ENCODE measurements at regions of chr18 and their contacts with region 1.

Region 1: GRCh38 chr18:55220523-55220922 is 261.3 kb upstream of the CCDC68 start:
- DNase-seq: no peak
- ATAC-seq: no peak
- H3K4me3 ChIP-seq: no peak overlapping the region
- H3K27ac ChIP-seq: no peak overlapping the region
- H3K4me1 ChIP-seq: peaks cover 4% of the 10 kb centered on the region; the same call in 1 of the 2 replicates
- H3K27me3 ChIP-seq: no peaks in the 10 kb centered on the region
- CTCF ChIP-seq: no peak
- POLR2A ChIP-seq: no peak
- RAD21 ChIP-seq: no peak

Region 2: GRCh38 chr18:54444319-54444914 is 776.1 kb before region 1 on chr18:
- CTCF ChIA-PET with region 1: no interaction called
- POLR2A ChIA-PET with region 1: no interaction called
- dilution Hi-C with region 1: no loop called
- in situ Hi-C with region 1: loop called (anchors 25 kb)
- intact Hi-C with region 1: loop called (anchors 10 kb)
- DNase-seq: peak; percentile 61
- ATAC-seq: peak; percentile 94
- H3K4me3 ChIP-seq: no peak overlapping the region
- H3K27ac ChIP-seq: no peak overlapping the region
- H3K4me1 ChIP-seq: no peaks in the 10 kb centered on the region
- H3K27me3 ChIP-seq: peaks cover 2% of the 10 kb centered on the region
- CTCF ChIP-seq: peak; percentile 73
- POLR2A ChIP-seq: no peak
- RAD21 ChIP-seq: peak; percentile 75

Region 3: DNA sequence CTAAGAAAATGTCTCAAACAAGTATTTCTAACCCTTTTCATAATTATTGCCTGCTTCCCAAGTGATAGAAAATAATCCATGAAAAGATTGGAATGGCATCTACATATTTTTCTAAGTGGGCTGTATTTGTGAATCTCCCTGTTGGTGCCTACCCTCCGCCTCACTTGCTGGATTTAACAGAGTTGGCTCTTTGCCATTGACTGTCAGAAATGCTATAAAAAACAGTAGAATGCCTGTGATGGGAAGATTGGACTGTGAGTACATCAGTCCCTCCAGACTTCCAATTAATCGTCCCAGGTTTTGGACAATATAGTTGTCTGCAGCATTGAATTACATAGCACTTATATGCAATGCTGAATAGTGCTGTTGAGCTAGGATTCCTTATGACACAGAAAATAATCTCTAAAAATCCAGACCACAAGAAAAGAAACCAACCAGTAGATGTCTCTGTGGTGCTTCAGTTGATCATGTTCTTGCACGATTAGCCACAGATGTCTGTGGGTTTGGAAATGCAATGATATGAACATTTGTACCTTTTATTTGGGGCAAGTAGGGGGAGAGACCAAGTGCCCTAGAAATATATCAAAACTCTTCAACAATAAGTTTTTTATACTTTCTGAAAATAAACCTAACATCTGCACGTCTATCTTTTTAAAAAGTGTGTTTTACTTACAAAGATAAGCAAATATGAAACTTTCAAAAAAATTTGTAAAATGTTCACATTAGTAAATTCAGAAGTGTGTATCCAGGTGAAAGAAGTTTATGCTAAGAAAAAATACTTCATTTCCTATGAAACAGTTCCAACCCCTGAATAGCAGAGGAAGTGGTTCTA is 541.0 kb before region 1 on chr18:
- CTCF ChIA-PET with region 1: no interaction called
- POLR2A ChIA-PET with region 1: no interaction called
- dilution Hi-C with region 1: no loop called
- in situ Hi-C with region 1: loop called (anchors 25 kb)
- intact Hi-C with region 1: loop called (anchors 2 kb)
- DNase-seq: peak; percentile 83
- ATAC-seq: peak; percentile 95
- H3K4me3 ChIP-seq: no peak overlapping the region
- H3K27ac ChIP-seq: no peak overlapping the region
- H3K4me1 ChIP-seq: no peaks in the 10 kb centered on the region
- H3K27me3 ChIP-seq: no peaks in the 10 kb centered on the region
- CTCF ChIP-seq: peak; percentile 84
- POLR2A ChIP-seq: no peak
- RAD21 ChIP-seq: peak; percentile 93

Region 4: GRCh38 chr18:55161916-55162315 is 58.6 kb before region 1 on chr18:
- CTCF ChIA-PET with region 1: no interaction called
- POLR2A ChIA-PET with region 1: no interaction called
- dilution Hi-C with region 1: no loop called
- in situ Hi-C with region 1: loop called (anchors 10 kb)
- intact Hi-C with region 1: no loop called
- DNase-seq: no peak
- ATAC-seq: no peak
- H3K4me3 ChIP-seq: no peak overlapping the region
- H3K27ac ChIP-seq: no peak overlapping the region
- H3K4me1 ChIP-seq: no peaks in the 10 kb centered on the region
- H3K27me3 ChIP-seq: peaks cover 21% of the 10 kb centered on the region
- CTCF ChIP-seq: no peak
- POLR2A ChIP-seq: no peak
- RAD21 ChIP-seq: no peak